IMR-90 (cell line): ENCODE measurements at regions of chr11 and their contacts with region 1.

Region 1: DNA sequence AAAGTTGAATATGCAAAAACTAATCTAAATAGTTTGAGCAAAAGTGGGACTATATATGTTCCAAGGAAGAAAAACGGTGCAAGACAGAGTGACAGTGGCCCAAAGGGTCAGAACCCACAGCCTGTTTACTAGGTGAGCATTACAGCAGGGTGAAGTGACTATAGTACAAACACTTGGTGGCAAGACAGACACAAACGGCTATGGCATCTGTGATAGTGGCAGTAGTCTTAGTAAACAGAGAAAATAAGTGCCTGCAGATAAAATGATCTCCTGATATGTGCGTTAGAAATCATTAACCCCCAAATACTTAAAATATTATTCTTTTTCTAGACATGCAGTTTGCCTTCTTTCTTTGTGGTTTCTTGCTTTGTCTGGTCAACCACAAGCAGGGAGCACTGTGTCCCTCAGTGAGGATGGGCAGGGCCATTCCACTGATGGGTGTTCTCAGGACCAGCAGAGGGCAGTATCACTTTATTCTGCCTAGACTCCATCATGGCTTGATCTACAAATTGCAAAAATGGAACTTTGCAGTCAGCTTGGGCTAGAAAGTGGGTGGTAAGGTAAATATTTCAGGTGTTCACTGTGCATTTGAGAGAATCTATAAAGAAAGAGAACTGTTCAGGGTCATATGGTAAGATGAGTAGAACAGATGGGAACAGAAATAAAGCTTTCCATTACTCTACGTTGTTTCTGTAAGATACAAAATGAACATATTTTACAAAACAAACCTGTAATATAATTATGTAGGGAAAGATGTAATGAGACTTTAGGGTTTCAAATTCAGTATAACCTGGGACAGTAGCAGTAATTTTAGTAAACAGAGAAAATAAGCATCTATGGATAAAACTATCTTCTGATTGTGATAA is 198.2 kb downstream of the SWAP70 start:
- DNase-seq: peak; percentile 75
- ATAC-seq: peak; percentile 74
- H3K4me3 ChIP-seq: no peak overlapping the region
- H3K27ac ChIP-seq: peak overlapping the region; percentile 34; the same call in 1 of the 2 replicates
- H3K4me1 ChIP-seq: peaks cover 9% of the 10 kb centered on the region
- H3K27me3 ChIP-seq: no peaks in the 10 kb centered on the region
- CTCF ChIP-seq: peak; percentile 75
- POLR2A ChIP-seq: no peak
- RAD21 ChIP-seq: peak; percentile 77

Region 2: GRCh38 chr11:9906043-9906791 is 44.1 kb after region 1 on chr11:
- CTCF ChIA-PET with region 1: no interaction called
- POLR2A ChIA-PET with region 1: no interaction called
- dilution Hi-C with region 1: no loop called
- in situ Hi-C with region 1: no loop called
- intact Hi-C with region 1: loop called (anchors 2 kb)
- DNase-seq: peak; percentile 94
- ATAC-seq: peak; percentile 92
- H3K4me3 ChIP-seq: no peak overlapping the region
- H3K27ac ChIP-seq: peak overlapping the region; percentile 92; the same call in 1 of the 2 replicates
- H3K4me1 ChIP-seq: peaks cover 11% of the 10 kb centered on the region
- H3K27me3 ChIP-seq: no peaks in the 10 kb centered on the region
- CTCF ChIP-seq: no peak
- POLR2A ChIP-seq: no peak
- RAD21 ChIP-seq: no peak

Region 3: DNA sequence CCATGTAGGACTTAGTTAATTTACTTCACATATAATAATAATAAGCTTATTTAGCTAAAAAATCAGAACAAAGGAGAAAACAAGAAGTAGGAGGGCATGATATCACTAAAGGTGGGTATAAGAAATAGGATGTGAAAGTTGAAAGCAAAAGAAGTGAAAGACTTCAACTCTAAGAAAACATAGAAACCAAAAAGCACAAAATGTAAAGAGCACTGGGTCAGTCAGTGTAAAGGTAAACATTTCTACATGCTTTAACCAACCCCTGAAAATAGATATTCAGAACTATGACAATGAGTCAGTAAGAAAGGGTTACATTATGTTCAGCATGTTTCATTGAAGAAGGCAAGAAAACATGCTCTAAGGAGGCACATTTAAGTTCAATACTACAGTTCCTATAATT is 100.6 kb after region 1 on chr11:
- CTCF ChIA-PET with region 1: no interaction called
- POLR2A ChIA-PET with region 1: no interaction called
- dilution Hi-C with region 1: no loop called
- in situ Hi-C with region 1: no loop called
- intact Hi-C with region 1: no loop called
- DNase-seq: peak; percentile 23
- ATAC-seq: peak; percentile 32; the same call in 1 of the 2 replicates
- H3K4me3 ChIP-seq: no peak overlapping the region
- H3K27ac ChIP-seq: no peak overlapping the region
- H3K4me1 ChIP-seq: 0 out of 2 replicates have a peak, but pooled peaks cover 1% of the 10 kb centered on the region
- H3K27me3 ChIP-seq: no peaks in the 10 kb centered on the region
- CTCF ChIP-seq: no peak
- POLR2A ChIP-seq: no peak
- RAD21 ChIP-seq: no peak

Region 4: GRCh38 chr11:9972989-9973388 is 110.9 kb after region 1 on chr11:
- CTCF ChIA-PET with region 1: interaction called, 6 read pairs
- POLR2A ChIA-PET with region 1: no interaction called
- dilution Hi-C with region 1: no loop called
- in situ Hi-C with region 1: no loop called
- intact Hi-C with region 1: loop called (anchors 1 kb)
- DNase-seq: peak; percentile 70
- ATAC-seq: peak; percentile 70
- H3K4me3 ChIP-seq: no peak overlapping the region
- H3K27ac ChIP-seq: no peak overlapping the region
- H3K4me1 ChIP-seq: peaks cover 12% of the 10 kb centered on the region; the same call in 1 of the 2 replicates
- H3K27me3 ChIP-seq: no peaks in the 10 kb centered on the region
- CTCF ChIP-seq: peak; percentile 75
- POLR2A ChIP-seq: no peak
- RAD21 ChIP-seq: peak; percentile 85

Region 5: DNA sequence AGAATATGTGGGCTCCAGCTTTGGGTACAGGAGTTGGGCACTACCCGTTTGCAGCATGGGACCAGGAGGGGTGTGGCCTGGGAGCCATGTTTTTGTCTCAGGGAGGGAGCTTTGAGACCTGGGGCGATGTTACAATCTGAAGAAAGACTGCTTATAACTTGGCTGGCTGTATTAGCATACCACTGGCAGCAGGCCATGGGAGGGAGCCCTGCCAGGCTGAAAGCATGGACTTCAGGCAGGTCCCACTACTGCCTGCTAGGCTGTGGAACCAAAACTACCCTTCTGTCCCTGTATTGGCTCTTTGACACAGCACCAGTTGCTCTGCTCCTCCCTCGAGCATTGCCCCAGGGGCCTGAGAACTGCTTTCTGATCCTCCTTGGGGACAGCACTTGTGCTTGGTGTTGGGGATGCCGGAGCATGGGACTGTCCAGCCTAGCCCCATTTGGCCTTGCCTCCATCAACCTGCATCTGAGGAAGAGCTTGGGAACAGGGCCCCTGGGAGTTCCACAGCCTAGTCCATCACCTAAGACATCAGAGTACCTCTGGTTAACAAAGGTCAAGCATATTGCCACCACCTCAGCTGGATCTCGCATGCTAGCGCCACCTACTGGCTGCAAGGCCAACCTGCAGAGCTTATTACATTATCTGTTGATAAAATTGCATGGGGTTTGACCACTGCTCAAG is 214.5 kb after region 1 on chr11:
- CTCF ChIA-PET with region 1: no interaction called
- POLR2A ChIA-PET with region 1: no interaction called
- dilution Hi-C with region 1: no loop called
- in situ Hi-C with region 1: no loop called
- intact Hi-C with region 1: loop called (anchors 10 kb)
- DNase-seq: peak; percentile 63
- ATAC-seq: peak; percentile 72
- H3K4me3 ChIP-seq: no peak overlapping the region
- H3K27ac ChIP-seq: no peak overlapping the region
- H3K4me1 ChIP-seq: peaks cover 15% of the 10 kb centered on the region
- H3K27me3 ChIP-seq: no peaks in the 10 kb centered on the region
- CTCF ChIP-seq: peak; percentile 44
- POLR2A ChIP-seq: no peak
- RAD21 ChIP-seq: peak; percentile 34; the same call in 1 of the 2 replicates

Region 6: DNA sequence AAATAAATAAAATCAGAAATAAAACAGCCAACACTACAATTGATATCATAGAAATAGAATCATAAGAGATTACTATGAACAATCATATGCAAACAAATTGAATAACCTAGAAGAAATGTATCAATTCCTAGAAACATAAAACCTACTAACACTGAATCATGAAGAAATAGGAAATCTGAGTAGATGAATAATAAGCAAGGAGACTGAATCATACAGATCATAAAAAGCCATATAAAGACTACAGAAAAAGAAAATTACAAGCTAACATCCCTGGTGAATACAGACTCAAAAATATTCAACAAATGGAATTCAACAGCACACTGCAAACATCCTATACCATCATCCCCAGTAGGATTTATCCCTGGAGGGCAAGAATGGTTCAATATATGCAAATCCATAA is 296.4 kb after region 1 on chr11:
- CTCF ChIA-PET with region 1: no interaction called
- POLR2A ChIA-PET with region 1: no interaction called
- dilution Hi-C with region 1: no loop called
- in situ Hi-C with region 1: no loop called
- intact Hi-C with region 1: no loop called
- DNase-seq: peak; percentile 34
- ATAC-seq: no peak
- H3K4me3 ChIP-seq: no peak overlapping the region
- H3K27ac ChIP-seq: no peak overlapping the region
- H3K4me1 ChIP-seq: peaks cover 3% of the 10 kb centered on the region
- H3K27me3 ChIP-seq: no peaks in the 10 kb centered on the region
- CTCF ChIP-seq: no peak
- POLR2A ChIP-seq: no peak
- RAD21 ChIP-seq: no peak

Region 7: GRCh38 chr11:10322830-10323792 is 461.0 kb after region 1 on chr11:
- CTCF ChIA-PET with region 1: no interaction called
- POLR2A ChIA-PET with region 1: no interaction called
- dilution Hi-C with region 1: no loop called
- in situ Hi-C with region 1: no loop called
- intact Hi-C with region 1: loop called (anchors 2 kb)
- DNase-seq: peak; percentile 93
- ATAC-seq: peak; percentile 50
- H3K4me3 ChIP-seq: no peak overlapping the region
- H3K27ac ChIP-seq: peak overlapping the region; percentile 48; the same call in 1 of the 2 replicates
- H3K4me1 ChIP-seq: peaks cover 38% of the 10 kb centered on the region
- H3K27me3 ChIP-seq: no peaks in the 10 kb centered on the region
- CTCF ChIP-seq: peak; percentile 68
- POLR2A ChIP-seq: no peak
- RAD21 ChIP-seq: peak; percentile 67